ENCODE measurements at regions of chr12 and their contacts with region 1.

Region 1: GRCh38 chr12:751192-751998 is 984 bp upstream of the WNK1 start:
- DNase-seq: peak; percentile 84 to 99 (median 90)

Region 2: DNA sequence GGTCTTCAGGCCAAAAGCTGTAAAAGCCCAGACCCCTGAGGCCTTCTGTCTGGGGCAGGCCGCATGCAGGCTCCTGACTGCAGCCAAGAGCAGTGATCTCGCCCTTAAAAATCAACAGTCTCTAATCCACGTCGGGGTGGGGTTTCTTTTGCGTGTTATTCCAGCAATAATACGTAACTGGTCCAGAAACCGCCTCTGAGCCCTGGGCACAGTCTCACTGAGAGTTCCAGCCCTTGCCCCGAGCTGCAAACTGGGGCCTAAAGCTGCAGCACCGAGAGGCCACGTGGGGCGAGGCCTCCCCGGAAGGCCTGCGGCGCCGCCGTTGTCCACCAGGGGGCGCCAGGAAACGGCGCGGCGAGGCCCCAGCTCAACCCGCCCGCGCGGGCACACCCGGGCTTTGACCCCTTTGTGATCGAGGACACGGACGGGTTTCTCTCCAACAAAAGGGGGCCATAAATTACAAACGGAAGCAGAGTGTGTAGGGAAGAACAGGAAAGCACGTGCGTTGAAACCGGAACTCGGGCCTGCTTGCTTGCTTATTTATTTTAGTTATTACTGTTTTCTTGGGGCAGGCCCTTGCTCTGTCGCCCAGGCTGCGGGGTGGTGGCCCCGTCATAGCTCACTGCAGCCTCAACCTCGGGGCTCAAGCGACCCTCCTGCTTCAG is 175.3 kb before region 1 on chr12:
- intact Hi-C with region 1: loop called (anchors 2 kb)
- DNase-seq: peak; percentile 35 to 96 (median 73)

Region 3: GRCh38 chr12:642633-643474 is 108.5 kb before region 1 on chr12:
- intact Hi-C with region 1: loop called (anchors 5 kb)
- DNase-seq: peak in 9 of 10 donors; percentile 52 to 94 (median 63)

Region 4: DNA sequence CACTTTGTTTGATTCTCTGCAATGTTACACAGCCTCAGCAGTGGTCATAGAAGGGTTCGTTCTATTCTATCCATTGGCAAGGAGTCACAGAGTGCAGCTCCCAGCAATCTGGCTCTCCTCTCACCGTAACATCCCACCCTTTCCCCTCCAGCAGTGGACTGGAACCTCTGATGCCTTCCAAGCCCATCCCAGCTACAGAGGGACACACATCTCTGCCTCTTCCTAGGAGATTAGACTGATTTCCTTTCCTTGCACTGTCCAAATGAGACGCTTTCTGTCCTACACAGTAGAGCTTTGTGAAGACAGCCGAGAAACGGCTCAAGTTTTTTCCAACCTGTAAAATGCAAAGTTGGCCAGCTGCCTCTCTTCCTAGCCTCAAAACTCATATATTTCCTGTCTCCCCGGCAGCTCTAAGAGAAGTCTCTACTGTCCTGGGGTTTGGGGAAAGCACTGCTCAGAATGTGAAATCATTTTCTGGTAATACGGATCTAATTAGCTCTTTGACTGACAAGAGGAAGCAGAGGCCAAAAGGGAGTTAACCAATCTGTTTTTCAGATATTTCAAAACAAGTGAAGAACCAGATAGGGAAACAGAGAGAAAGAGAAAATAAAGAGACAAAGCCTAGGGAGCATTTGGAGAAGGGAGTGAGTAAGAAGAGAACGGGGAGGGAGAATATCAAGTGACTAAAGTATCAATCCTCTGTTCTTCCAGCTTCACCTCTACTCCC is 88.7 kb before region 1 on chr12:
- intact Hi-C with region 1: loop called (anchors 1 kb)
- DNase-seq: peak in 1 of 10 donors; percentile 23

Region 5: DNA sequence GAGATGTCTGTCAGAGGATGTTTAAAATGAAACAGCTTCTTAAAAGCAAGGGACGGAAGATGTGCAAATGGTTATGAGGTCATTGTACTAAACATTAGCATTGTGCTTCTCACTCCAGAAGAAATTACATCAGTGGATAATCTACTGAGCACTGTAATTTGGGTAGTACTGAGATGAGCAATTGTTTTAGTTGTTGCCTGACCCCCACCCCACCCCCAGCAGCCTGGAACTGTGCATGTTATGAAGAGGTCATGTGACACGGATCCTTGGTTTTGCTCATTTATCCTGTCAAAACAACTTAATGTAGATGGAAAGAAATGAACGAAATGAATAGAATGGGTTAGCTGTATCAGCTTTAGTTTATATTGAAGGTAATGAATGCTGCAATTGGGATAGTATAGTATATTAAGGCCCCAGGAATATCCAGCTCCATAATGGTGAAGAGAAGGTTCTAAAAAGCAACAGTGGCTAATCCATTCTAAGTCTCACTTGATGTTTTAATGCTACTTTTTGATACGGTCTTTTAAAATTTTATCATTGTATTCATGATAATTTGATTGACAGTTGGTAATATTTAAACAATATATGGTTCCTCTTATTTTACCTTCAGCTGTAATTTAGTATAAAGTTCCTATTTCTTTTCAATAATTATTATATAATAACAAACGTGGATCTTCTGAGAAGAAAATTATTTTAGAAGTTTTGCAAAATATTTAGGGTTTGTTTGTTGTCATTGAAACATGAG is 59.4 kb after region 1 on chr12:
- intact Hi-C with region 1: loop called (anchors 5 kb)
- DNase-seq: peak in 1 of 10 donors; percentile 61

Region 6: GRCh38 chr12:949453-950191 is 198.2 kb after region 1 on chr12 and contains the start of gene RAD52:
- intact Hi-C with region 1: loop called (anchors 1 kb)
- DNase-seq: peak; percentile 94 to 99 (median 97)

Region 7: GRCh38 chr12:1093166-1093751 is 341.9 kb after region 1 on chr12:
- intact Hi-C with region 1: no loop called
- DNase-seq: no peak

Region 8: DNA sequence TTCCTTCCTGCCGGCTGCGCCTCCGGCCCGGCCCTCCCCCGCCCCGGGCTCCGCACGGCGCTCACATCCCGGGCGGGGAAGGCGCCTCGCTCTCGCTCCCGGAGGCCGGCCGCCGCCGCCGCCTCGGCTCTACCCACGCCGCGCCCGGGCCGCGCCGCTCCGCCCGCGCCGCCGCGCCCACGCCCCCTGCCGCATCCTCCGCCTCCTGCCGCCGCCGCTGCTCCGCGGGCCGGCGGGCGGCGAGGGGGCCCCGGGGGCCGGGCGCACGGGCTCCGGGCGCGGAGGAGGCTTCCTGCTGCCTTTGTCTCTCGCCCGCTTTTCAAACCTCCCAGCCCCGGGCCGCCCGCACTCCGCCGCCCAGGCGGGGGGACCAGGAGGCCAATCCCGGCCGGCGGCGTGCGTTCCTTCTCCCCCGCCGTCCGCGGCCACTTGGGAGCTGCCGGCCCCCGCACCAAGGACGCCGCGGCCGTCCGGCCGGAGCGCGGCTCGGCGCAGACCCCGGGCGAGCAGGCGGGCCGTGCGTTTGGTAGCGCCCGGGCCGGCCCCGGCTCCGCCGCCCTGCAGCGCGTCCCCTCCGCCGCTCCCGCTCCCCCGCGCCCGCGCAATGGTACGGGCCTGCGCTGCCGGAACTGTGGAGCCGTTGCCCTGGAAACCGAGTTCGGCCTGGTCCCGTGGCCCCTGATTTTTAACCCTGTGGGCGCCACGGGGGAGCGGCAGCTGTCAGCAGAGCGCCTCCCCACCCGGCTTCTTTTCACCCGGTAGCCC is 843.0 kb after region 1 on chr12 and contains the start of gene FBXL14:
- intact Hi-C with region 1: loop called (anchors 5 kb)
- DNase-seq: peak; percentile 85 to 98 (median 88)